H1 (cell line): ENCODE measurements at regions of chr1 and their contacts with region 1.

Region 1: GRCh38 chr1:225480825-225481434 is 53.1 kb upstream of the LBR start:
- DNase-seq: peak in 1 of 2 experiments; percentile 95
- H3K4me3 ChIP-seq: no peak overlapping the region
- H3K27ac ChIP-seq: no peak overlapping the region
- H3K4me1 ChIP-seq: peaks cover 0 to 2% (median under 1%) of the 10 kb centered on the region in 4 experiments; a peak in 2 of 7 replicates
- H3K27me3 ChIP-seq: no peaks in the 10 kb centered on the region
- CTCF ChIP-seq: peak; percentile 91 to 98 (median 97)
- EP300 ChIP-seq: no peak
- POLR2A ChIP-seq: no peak
- RAD21 ChIP-seq: peak; percentile 88 to 91

Region 2: GRCh38 chr1:225508538-225509375 is 27.8 kb after region 1 on chr1:
- CTCF ChIA-PET with region 1: interaction called, 24 read pairs
- POLR2A ChIA-PET with region 1: no interaction called
- DNase-seq: peak; percentile 29 to 46
- H3K4me3 ChIP-seq: 0 out of 8 replicates have a peak overlapping the region, but pooled peaks of 1 of the 4 experiments have one; percentile 4
- H3K27ac ChIP-seq: peak overlapping the region; percentile 33
- H3K4me1 ChIP-seq: peaks cover 5 to 19% (median 15%) of the 10 kb centered on the region in 4 experiments; a peak in 5 of 7 replicates
- H3K27me3 ChIP-seq: no peaks in the 10 kb centered on the region
- CTCF ChIP-seq: no peak
- EP300 ChIP-seq: no peak
- POLR2A ChIP-seq: no peak
- RAD21 ChIP-seq: no peak

Region 3: DNA sequence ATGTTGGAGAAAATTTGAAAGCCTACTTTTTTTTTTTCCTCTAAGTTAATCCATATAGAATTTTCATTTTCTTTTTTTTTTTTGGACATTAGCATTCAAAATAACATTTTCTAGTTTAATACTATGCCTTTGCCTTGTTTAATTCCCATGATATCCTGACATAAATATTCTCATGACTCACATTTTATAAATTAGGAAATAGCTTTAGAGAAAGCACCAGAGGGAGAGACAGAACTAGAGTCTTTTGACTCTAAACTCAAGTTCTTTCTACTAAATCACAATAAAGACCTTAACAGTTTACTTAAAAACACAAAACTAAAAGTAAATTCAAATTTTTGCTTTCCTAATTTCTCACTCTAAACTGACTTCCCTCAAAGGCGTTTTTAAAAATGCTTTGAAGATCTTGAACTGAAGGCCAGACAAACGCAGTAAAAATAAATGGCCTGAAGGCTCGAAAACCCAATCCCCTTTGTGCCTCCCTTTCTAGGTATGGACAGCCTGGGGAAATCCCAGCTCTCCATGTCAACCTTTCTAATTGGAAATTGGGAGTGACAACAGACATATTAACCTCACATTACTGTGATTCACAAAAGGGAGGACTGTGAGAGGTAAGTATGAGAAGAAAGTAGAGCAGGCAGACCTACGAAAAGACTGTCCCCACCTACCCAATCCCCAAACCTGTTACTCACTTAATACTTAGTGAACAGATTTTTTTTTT is 67.4 kb after region 1 on chr1:
- CTCF ChIA-PET with region 1: interaction called, 13 read pairs
- POLR2A ChIA-PET with region 1: no interaction called
- DNase-seq: no peak
- H3K4me3 ChIP-seq: no peak overlapping the region
- H3K27ac ChIP-seq: no peak overlapping the region
- H3K4me1 ChIP-seq: no peaks in the 10 kb centered on the region
- H3K27me3 ChIP-seq: no peaks in the 10 kb centered on the region
- CTCF ChIP-seq: no peak
- EP300 ChIP-seq: no peak
- POLR2A ChIP-seq: no peak
- RAD21 ChIP-seq: no peak

Region 4: GRCh38 chr1:225612287-225612686 is 131.4 kb after region 1 on chr1:
- CTCF ChIA-PET with region 1: no interaction called
- POLR2A ChIA-PET with region 1: no interaction called
- DNase-seq: no peak
- H3K4me3 ChIP-seq: no peak overlapping the region
- H3K27ac ChIP-seq: no peak overlapping the region
- H3K4me1 ChIP-seq: peaks cover 0 to 10% (median 5%) of the 10 kb centered on the region in 4 experiments; a peak in 4 of 7 replicates
- H3K27me3 ChIP-seq: no peaks in the 10 kb centered on the region
- CTCF ChIP-seq: no peak
- EP300 ChIP-seq: no peak
- POLR2A ChIP-seq: no peak
- RAD21 ChIP-seq: no peak

Region 5: GRCh38 chr1:225739542-225740107 is 258.7 kb after region 1 on chr1:
- CTCF ChIA-PET with region 1: interaction called, 13 read pairs
- POLR2A ChIA-PET with region 1: no interaction called
- DNase-seq: no peak
- H3K4me3 ChIP-seq: no peak overlapping the region
- H3K27ac ChIP-seq: no peak overlapping the region
- H3K4me1 ChIP-seq: no peaks in the 10 kb centered on the region
- H3K27me3 ChIP-seq: peaks cover 0 to 12% (median 2%) of the 10 kb centered on the region in 4 experiments; a peak in 5 of 7 replicates
- CTCF ChIP-seq: no peak
- EP300 ChIP-seq: no peak
- POLR2A ChIP-seq: no peak
- RAD21 ChIP-seq: no peak

Region 6: DNA sequence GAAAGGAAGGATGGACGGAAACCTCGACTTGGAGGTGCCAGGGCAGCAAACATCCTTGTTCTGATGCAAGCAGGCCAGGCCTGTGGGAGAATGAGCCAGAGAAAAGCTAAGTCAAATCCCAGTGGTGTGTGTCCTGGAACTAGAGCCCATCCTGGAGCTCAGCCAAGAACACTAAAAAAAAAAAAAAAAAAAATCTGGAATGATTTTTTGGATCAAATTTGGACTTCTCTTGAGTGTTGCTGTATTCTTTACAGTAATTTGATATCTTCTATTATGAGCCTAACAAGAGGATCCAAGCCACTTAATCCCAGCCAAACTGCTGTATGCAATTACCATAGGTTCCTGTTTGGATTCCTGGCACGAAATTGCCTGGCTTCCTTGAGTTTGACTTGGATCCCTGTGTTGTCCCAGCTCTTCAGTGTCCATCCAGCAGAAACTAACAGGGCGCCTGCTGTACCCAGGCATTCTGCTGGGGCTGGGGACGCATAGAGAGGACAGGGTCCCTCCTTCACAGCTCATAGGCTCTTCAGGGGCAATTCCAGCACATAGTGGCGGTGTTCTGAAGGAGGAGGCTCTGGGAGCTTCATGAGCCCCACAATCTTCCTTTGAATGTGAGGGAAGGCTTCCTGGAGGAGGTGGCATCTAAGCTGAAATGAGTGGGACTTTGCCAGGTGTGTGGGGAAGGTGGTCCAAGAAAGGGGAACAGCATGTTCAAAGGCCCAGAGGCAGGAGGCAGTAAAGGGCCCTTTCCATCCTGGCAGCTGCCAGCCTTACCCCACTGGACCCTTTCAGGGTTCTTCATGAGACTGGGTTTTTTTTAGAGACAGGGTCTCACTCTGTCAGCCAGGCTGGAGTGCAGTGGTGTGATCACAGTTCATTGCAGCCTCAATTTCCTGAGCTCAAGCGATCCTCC is 353.7 kb after region 1 on chr1:
- CTCF ChIA-PET with region 1: interaction called, 11 read pairs
- POLR2A ChIA-PET with region 1: no interaction called
- DNase-seq: no peak
- H3K4me3 ChIP-seq: no peak overlapping the region
- H3K27ac ChIP-seq: no peak overlapping the region
- H3K4me1 ChIP-seq: no peaks in the 10 kb centered on the region
- H3K27me3 ChIP-seq: no peaks in the 10 kb centered on the region
- CTCF ChIP-seq: no peak
- EP300 ChIP-seq: no peak
- POLR2A ChIP-seq: no peak
- RAD21 ChIP-seq: no peak

Region 7: DNA sequence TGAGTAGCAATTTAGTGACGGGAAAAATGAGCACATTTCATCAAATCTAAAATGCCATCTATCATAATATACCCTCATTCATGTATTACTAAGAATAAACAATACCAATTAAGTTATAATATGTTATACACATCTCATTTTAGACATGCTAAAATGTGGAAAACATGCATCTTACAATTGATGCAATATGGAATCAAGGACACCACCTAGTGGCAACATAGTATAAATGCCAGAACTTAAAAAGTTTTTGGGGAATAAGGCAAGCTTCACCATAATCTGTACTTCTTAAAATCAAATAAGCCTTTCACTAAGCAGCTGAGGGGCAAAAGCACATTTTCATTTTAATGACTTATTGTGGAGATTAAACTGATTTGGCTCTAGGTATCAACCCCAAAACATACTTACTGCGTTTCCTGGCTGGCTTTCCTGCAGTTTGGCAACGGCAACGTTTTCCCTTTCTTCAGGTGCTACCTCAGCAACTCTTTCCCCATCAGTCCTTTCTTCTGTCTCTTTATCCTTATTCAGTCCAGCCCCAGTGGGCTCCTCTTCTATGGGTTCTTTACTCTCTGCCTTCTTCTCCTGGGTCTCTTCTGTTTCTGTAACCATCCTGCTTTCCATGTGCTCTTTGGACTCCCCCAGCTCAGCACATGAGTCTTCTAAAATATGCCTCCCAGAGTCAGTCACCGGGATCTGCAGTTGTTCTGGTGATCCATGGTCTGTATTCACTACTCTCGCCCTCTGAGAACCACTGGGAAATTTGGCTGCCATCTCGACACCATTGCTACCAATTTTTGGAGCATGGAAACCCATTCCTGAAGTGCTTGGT is 506.8 kb after region 1 on chr1:
- CTCF ChIA-PET with region 1: interaction called, 15 read pairs
- POLR2A ChIA-PET with region 1: no interaction called
- DNase-seq: no peak
- H3K4me3 ChIP-seq: no peak overlapping the region
- H3K27ac ChIP-seq: no peak overlapping the region
- H3K4me1 ChIP-seq: no peaks in the 10 kb centered on the region
- H3K27me3 ChIP-seq: no peaks in the 10 kb centered on the region
- CTCF ChIP-seq: peak in 2 of 3 experiments; percentile 18 to 60; a peak in 2 of 4 replicates
- EP300 ChIP-seq: no peak
- POLR2A ChIP-seq: no peak
- RAD21 ChIP-seq: peak; percentile 30 to 35